ENCODE measurements at regions of chr10 and their contacts with region 1.

Region 1: DNA sequence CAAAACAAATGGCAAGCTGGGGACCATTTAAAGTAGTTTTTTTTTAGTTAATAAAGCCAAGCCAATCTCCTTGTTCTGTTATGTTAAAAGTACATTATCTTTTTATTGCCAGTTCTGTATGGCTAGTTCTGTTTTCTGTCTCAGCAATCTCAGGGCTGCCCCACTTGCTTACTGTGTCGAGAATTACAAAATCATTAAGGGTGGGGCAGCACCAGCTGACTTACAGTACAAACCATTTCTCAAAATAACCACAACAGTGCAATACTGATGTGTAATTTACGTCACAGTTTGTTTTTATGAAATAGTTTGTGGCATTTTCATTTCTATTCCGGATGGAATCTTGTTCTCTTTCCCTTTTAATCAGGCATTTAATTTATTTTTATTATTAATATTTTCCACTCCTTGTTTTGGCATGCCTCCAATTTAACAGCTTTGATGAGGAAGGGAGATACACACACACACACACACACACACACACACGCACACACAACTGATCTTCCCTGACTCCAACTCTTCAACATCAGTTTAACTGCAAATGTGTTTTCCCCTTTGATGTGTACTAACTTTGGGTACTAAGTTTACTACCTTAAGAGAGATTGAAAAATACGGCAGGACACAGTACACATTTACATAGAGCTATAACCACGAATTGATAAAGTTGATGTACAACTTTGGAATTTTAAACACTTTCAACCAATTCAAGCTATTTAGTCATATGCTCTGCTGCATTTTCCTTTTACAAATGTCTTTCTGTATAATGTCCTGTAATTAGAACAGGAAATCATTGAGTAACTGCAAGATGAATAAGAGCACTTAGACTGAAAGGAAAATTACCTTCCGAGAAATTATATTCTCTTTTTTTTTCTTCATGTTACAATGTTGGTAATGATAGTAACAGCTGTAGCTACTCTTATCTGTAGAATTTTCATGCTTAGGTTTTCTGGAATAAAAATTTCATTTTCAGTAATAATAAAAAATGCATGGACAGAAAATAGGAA is 91.5 kb downstream of the ARID5B start:
- DNase-seq: peak; percentile 69
- H3K4me3 Mint-ChIP-seq: peak overlapping the region; percentile 76
- H3K27ac Mint-ChIP-seq: peak overlapping the region; percentile 90
- H3K4me1 Mint-ChIP-seq: peaks cover 86% of the 10 kb centered on the region
- H3K27me3 Mint-ChIP-seq: no peaks in the 10 kb centered on the region

Region 2: GRCh38 chr10:62005281-62005680 is 12.3 kb after region 1 on chr10:
- intact Hi-C with region 1: loop called (anchors 1 kb)
- DNase-seq: no peak
- H3K4me3 Mint-ChIP-seq: no peak overlapping the region
- H3K27ac Mint-ChIP-seq: peak overlapping the region; percentile 25
- H3K4me1 Mint-ChIP-seq: peaks cover 93% of the 10 kb centered on the region
- H3K27me3 Mint-ChIP-seq: no peaks in the 10 kb centered on the region

Region 3: DNA sequence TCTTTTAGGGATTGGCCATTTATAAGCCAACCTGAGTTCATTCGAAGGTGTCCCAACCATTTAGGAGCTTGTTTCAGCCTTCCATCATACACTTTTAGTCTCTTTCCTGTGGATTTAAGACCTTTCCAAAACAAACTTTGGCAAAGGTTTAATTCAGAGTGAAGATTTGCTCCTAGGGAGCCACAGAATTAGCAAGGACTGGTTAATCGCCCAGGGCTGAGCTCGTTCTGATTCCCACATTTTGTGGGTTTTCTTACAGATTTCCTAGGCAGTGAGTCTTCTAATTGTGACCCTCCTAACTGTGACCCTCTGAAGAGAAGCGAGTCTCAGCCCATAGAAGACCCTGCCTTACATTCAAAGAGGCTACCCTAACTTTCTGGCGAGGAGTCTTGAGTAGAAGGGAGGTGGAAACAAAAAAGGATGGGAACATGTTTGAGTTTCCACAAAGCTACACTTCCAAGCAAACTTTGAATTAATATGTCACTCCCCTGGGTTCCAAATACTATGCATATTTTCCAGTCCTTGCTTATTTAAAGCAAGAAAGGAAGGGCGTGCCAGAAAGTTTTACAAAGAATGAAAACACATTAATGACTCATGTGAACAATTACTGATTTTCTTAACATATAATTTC is 26.8 kb after region 1 on chr10:
- intact Hi-C with region 1: loop called (anchors 1 kb)
- DNase-seq: no peak
- H3K4me3 Mint-ChIP-seq: peak overlapping the region; percentile 61
- H3K27ac Mint-ChIP-seq: peak overlapping the region; percentile 94
- H3K4me1 Mint-ChIP-seq: peaks cover 66% of the 10 kb centered on the region
- H3K27me3 Mint-ChIP-seq: no peaks in the 10 kb centered on the region